Naive thymus-derived CD4-positive, alpha-beta T cell (primary cell): ENCODE measurements at regions of chr17 and their contacts with region 1.

Region 1: DNA sequence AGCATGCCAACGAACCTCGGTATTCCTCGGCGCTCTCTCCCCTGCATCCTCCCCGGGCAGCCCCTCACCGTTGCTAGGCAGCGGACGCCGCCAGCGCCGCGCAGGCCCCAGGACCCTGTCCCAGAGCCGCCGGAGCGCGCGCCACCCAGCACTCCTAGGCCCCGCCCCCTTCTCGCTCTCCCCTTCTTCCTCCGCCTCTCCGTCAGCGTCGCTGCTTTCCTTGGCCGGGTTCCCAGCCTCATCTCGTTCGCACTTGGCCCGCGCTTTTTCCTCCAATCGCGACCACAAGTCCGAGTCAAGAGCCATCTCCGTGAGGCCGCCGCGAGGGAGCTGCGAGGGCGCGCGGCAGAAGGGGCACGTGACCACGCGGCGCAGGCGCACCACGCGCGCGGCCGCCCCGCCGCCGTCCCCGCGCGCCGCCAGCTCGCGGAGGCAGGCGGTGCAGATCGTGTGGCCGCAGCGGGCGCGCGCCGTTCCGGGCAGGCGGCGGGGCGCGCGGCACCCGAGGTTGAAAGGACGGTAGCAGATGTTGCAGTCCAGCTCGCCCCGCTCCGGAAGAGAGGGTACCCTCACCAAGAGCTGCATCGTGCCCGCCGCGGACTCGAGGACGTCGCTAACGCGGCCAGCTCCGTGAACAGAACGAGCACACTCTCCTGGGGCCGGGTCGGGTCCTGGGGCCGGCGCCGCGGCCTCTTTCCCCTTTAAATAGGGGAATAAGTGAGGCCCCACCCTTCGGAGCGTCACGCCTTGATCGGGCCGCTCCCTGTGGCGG is at the start of gene RNF227:
- DNase-seq: peak; percentile 74 to 90 (median 83)
- ATAC-seq: peak; percentile 88
- H3K4me3 ChIP-seq: peak within 1 kb of the TSS; percentile 91
- H3K4me3 Mint-ChIP-seq: peak within 1 kb of the TSS; percentile 64 to 98 (median 88)
- H3K27ac ChIP-seq: peak within 1 kb of the TSS; percentile 75
- H3K27ac Mint-ChIP-seq: peak within 1 kb of the TSS; percentile 82 to 95 (median 92)
- H3K4me1 ChIP-seq: peaks cover 20 to 22% of the 10 kb centered on the region in 2 donors
- H3K4me1 Mint-ChIP-seq: peaks cover 22 to 37% (median 35%) of the 10 kb centered on the region in 7 donors
- H3K27me3 ChIP-seq: no peaks in the 10 kb centered on the region
- H3K27me3 Mint-ChIP-seq: no peaks in the 10 kb centered on the region
- total RNA-seq, gene RNF227: 2.6 to 8.2 (median 5.5) TPM

Region 2: DNA sequence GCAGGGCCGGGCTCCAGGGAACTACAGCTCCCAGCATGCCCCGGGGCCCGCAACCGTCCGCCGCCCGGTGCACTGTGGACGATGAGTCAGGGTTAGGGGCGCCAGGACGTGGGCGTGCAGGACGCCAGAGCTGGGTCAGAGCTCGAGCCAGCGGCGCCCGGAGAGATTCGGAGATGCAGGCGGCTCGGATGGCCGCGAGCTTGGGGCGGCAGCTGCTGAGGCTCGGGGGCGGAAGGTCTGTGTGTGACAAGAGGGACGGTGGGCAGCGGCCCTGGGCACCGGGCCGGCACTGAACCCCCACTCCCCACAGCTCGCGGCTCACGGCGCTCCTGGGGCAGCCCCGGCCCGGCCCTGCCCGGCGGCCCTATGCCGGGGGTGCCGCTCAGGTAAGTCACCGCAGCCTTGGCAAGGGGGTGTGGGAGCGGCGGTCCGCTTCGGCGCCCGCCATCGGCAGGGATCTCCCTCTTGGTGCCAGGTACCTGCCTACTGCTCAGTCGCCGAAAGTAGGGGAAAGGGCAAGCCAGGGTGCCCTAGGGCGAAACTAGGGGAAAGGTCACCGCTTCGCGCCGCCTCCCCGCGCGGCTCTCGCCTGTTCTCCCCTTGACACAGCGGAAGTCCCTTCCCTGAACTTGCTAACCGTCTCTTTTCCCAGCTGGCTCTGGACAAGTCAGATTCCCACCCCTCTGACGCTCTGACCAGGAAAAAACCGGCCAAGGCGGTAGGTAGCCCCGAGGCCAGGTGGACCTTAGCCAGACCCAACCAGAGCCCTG is 695.8 kb before region 1 on chr17 and contains the starts of genes ACADVL and DLG4:
- CTCF ChIA-PET with region 1: no interaction called
- POLR2A ChIA-PET with region 1: no interaction called
- intact Hi-C with region 1: no loop called
- DNase-seq: peak; percentile 45 to 87 (median 56)
- ATAC-seq: peak; percentile 76
- H3K4me3 ChIP-seq: peak within 1 kb of the TSS; percentile 73
- H3K4me3 Mint-ChIP-seq: peak within 1 kb of the TSS; percentile 88 to 95 (median 91)
- H3K27ac ChIP-seq: peak within 1 kb of the TSS; percentile 75
- H3K27ac Mint-ChIP-seq: peak within 1 kb of the TSS; percentile 81 to 98 (median 96)
- H3K4me1 ChIP-seq: peaks cover 25 to 47% of the 10 kb centered on the region in 2 donors
- H3K4me1 Mint-ChIP-seq: peaks cover 35 to 61% (median 55%) of the 10 kb centered on the region in 7 donors
- H3K27me3 ChIP-seq: no peaks in the 10 kb centered on the region
- H3K27me3 Mint-ChIP-seq: no peaks in the 10 kb centered on the region
- total RNA-seq, gene ACADVL: 287 to 390 (median 339) TPM
- total RNA-seq, gene DLG4: 10.9 to 25.4 (median 16.5) TPM

Region 3: GRCh38 chr17:7745748-7746470 is 169.9 kb before region 1 on chr17:
- CTCF ChIA-PET with region 1: interaction called, 3 read pairs
- POLR2A ChIA-PET with region 1: no interaction called
- intact Hi-C with region 1: loop called in 1 of 2 experiments (anchors 2 kb)
- DNase-seq: no peak
- ATAC-seq: no peak
- H3K4me3 ChIP-seq: no peak overlapping the region
- H3K4me3 Mint-ChIP-seq: no peak overlapping the region
- H3K27ac ChIP-seq: no peak overlapping the region
- H3K27ac Mint-ChIP-seq: no peak overlapping the region
- H3K4me1 ChIP-seq: no peaks in the 10 kb centered on the region
- H3K4me1 Mint-ChIP-seq: peaks cover 0 to 2% (median 0%) of the 10 kb centered on the region in 7 donors
- H3K27me3 ChIP-seq: no peaks in the 10 kb centered on the region
- H3K27me3 Mint-ChIP-seq: peaks cover 2 to 18% (median 10%) of the 10 kb centered on the region in 5 donors

Region 4: GRCh38 chr17:7834962-7835813 is 80.6 kb before region 1 on chr17:
- CTCF ChIA-PET with region 1: interaction called, 4 read pairs
- POLR2A ChIA-PET with region 1: interaction called, 17 read pairs
- intact Hi-C with region 1: no loop called
- DNase-seq: peak; percentile 76 to 97 (median 95)
- ATAC-seq: peak; percentile 70
- H3K4me3 ChIP-seq: peak overlapping the region; percentile 96
- H3K4me3 Mint-ChIP-seq: peak overlapping the region; percentile 91 to 99 (median 96)
- H3K27ac ChIP-seq: peak overlapping the region; percentile 96
- H3K27ac Mint-ChIP-seq: peak overlapping the region; percentile 95 to 100 (median 99)
- H3K4me1 ChIP-seq: peaks cover 29 to 38% of the 10 kb centered on the region in 2 donors
- H3K4me1 Mint-ChIP-seq: peaks cover 28 to 60% (median 44%) of the 10 kb centered on the region in 7 donors
- H3K27me3 ChIP-seq: no peaks in the 10 kb centered on the region
- H3K27me3 Mint-ChIP-seq: peaks cover 0 to 28% (median 0%) of the 10 kb centered on the region in 5 donors

Region 5: DNA sequence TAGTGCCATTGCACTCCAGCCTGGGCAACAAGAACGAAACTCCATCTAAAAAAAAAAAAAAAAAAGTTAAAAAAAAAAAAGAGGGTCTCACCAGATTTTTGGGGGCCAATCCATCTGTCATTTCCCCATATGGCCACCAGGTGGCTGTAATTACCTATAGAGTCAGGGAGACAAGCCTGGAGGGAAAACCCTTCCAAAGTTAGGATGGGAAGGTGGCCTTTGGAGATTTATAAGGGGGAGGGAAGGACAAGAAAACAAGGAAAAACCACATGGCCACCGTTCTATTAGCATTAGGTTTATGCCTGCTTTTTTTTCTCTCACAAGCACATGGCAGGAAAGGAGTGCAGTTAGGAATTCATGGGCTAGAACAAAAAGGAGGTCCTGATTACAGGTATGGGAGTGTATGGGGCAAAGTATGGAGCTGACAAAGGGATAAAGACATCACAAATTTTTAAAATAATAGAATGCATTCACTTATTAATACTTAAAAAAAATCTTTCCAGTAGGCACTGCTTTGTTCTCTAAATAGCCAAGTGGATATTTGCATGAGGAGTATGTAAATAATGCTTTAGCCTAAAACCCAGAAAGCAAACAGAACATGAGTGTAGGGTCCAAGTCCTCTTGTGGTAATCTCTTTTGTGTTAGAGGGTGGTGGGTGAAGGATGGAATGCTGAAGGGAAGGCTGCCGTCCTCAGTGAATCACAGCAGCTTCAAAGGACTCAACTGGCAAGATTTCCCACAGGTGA is 52.9 kb before region 1 on chr17:
- CTCF ChIA-PET with region 1: interaction called, 11 read pairs
- POLR2A ChIA-PET with region 1: interaction called, 13 read pairs
- intact Hi-C with region 1: loop called (anchors 1 kb)
- DNase-seq: peak in 3 of 9 donors; percentile 48 to 53 (median 49)
- ATAC-seq: no peak
- H3K4me3 ChIP-seq: no peak overlapping the region
- H3K4me3 Mint-ChIP-seq: no peak overlapping the region
- H3K27ac ChIP-seq: no peak overlapping the region
- H3K27ac Mint-ChIP-seq: peak overlapping the region in 1 of 9 donors; percentile 60
- H3K4me1 ChIP-seq: peaks cover 17 to 19% of the 10 kb centered on the region in 2 donors
- H3K4me1 Mint-ChIP-seq: peaks cover 16 to 32% (median 27%) of the 10 kb centered on the region in 7 donors
- H3K27me3 ChIP-seq: no peaks in the 10 kb centered on the region
- H3K27me3 Mint-ChIP-seq: no peaks in the 10 kb centered on the region

Region 6: GRCh38 chr17:7897773-7898172 is 18.0 kb before region 1 on chr17:
- CTCF ChIA-PET with region 1: no interaction called
- POLR2A ChIA-PET with region 1: interaction called, 6 read pairs
- intact Hi-C with region 1: loop called in 1 of 2 experiments (anchors 2 kb)
- DNase-seq: peak in 4 of 9 donors; percentile 33 to 42 (median 36)
- ATAC-seq: peak; percentile 75
- H3K4me3 ChIP-seq: no peak overlapping the region
- H3K4me3 Mint-ChIP-seq: no peak overlapping the region
- H3K27ac ChIP-seq: no peak overlapping the region
- H3K27ac Mint-ChIP-seq: peak overlapping the region in 8 of 9 donors; percentile 0 to 92 (median 78)
- H3K4me1 ChIP-seq: no peaks in the 10 kb centered on the region
- H3K4me1 Mint-ChIP-seq: peaks cover 8 to 27% (median 15%) of the 10 kb centered on the region in 7 donors
- H3K27me3 ChIP-seq: no peaks in the 10 kb centered on the region
- H3K27me3 Mint-ChIP-seq: no peaks in the 10 kb centered on the region

Region 7: GRCh38 chr17:7951143-7951803 is 35.5 kb after region 1 on chr17:
- CTCF ChIA-PET with region 1: no interaction called
- POLR2A ChIA-PET with region 1: no interaction called
- intact Hi-C with region 1: loop called in 1 of 2 experiments (anchors 1 kb)
- DNase-seq: peak in 3 of 9 donors; percentile 13 to 35 (median 14)
- ATAC-seq: peak; percentile 63
- H3K4me3 ChIP-seq: no peak overlapping the region
- H3K4me3 Mint-ChIP-seq: peak overlapping the region in 8 of 10 donors; percentile 16 to 59 (median 36)
- H3K27ac ChIP-seq: no peak overlapping the region
- H3K27ac Mint-ChIP-seq: peak overlapping the region; percentile 59 to 92 (median 81)
- H3K4me1 ChIP-seq: no peaks in the 10 kb centered on the region
- H3K4me1 Mint-ChIP-seq: peaks cover 4 to 22% (median 7%) of the 10 kb centered on the region in 7 donors
- H3K27me3 ChIP-seq: no peaks in the 10 kb centered on the region
- H3K27me3 Mint-ChIP-seq: no peaks in the 10 kb centered on the region

Region 8: GRCh38 chr17:7989781-7990655 is 74.2 kb after region 1 on chr17:
- CTCF ChIA-PET with region 1: interaction called, 48 read pairs
- POLR2A ChIA-PET with region 1: interaction called, 26 read pairs
- intact Hi-C with region 1: loop called (anchors 1 kb)
- DNase-seq: peak; percentile 82 to 99 (median 91)
- ATAC-seq: peak; percentile 96
- H3K4me3 ChIP-seq: peak overlapping the region; percentile 58
- H3K4me3 Mint-ChIP-seq: peak overlapping the region; percentile 80 to 88 (median 84)
- H3K27ac ChIP-seq: peak overlapping the region; percentile 65
- H3K27ac Mint-ChIP-seq: peak overlapping the region; percentile 80 to 95 (median 90)
- H3K4me1 ChIP-seq: peaks cover 10 to 13% of the 10 kb centered on the region in 2 donors
- H3K4me1 Mint-ChIP-seq: peaks cover 17 to 26% (median 20%) of the 10 kb centered on the region in 7 donors
- H3K27me3 ChIP-seq: no peaks in the 10 kb centered on the region
- H3K27me3 Mint-ChIP-seq: peaks cover 0 to 16% (median 0%) of the 10 kb centered on the region in 5 donors